ENCODE measurements at regions of chrX and their contacts with region 1.

Region 1: DNA sequence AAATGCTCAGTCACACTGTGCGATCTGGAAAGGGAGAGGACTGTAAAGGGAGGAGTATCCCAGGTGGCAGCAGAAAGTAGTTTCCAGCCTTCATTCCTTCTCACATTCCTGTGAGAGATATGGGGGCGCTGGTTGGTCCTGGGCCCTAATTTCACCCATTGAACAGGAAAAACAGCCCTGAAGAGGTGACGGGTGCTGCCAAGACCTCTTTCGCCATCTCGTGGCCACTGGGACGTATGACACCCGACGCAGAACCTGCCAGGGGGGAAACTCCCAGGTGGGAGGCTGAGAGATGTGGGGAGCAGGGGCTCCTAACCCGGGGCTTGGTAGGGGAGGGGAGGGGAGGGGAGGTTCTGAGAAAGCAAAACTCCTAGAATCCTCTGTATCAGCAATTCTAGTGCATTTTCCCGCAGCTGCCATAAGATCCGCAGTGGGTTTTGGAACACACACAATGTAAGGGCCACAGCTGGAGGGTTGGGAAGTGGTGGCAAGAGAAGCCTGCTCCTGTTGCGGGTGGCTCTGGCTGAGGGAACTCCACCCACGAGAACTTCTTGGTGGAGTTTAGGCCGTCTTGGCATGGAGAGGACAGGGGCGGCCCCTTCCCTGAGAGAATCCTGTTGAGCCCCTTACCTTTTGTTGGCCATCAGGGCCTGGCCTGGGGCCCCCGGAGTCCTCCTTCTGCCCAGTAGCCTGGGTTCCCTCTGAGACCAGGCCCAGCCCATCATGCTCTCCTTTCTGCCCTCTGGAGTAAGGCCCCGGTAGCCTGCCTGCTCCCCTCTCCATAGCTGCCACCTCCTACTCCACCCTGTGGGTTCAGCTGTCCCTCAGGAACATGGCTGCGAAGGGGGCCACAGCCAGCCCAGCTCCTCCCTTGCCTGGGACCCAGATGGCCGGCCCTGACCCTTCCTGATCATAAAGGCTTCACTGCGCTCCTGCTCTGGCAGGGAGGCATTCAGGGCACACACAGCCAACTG is 134.1 kb downstream of the OR13H1 start:
- DNase-seq: peak; percentile 50
- H3K4me3 Mint-ChIP-seq: no peak overlapping the region
- H3K27ac Mint-ChIP-seq: no peak overlapping the region
- H3K4me1 Mint-ChIP-seq: no peaks in the 10 kb centered on the region
- H3K27me3 Mint-ChIP-seq: no peaks in the 10 kb centered on the region

Region 2: DNA sequence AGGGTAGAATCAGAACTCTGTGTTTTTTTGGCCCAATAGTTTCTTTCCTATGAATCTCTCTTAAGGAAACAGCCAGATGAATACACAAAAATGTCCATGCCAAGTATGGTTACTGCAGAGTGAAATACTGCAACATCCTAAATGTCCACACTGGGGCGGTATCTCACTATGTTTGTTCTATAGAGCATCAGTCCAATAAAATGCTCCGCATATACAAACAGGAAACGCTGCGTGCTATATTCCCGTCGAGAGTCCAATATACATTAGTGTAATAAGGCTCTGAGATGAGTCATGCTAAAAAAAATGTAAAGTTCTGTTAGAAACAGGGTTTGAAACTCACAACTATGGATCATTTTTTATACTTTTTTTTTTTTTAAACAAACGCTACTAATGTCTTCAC is 702.0 kb before region 1 on chrX:
- CTCF ChIA-PET with region 1: interaction called, 10 read pairs
- DNase-seq: peak; percentile 48
- H3K4me3 Mint-ChIP-seq: no peak overlapping the region
- H3K27ac Mint-ChIP-seq: no peak overlapping the region
- H3K4me1 Mint-ChIP-seq: no peaks in the 10 kb centered on the region
- H3K27me3 Mint-ChIP-seq: no peaks in the 10 kb centered on the region

Measured in activated naive CD4-positive, alpha-beta T cell treated with anti-CD3 and anti-CD28 coated beads, Interleukin-2, amount 10 ng/mL, durations not matched to agents 7 days and 5 days (primary cell).